Left ventricle myocardium superior (tissue), 1 donor: ENCODE measurements at regions of chr11 and their contacts with region 1.

Region 1: DNA sequence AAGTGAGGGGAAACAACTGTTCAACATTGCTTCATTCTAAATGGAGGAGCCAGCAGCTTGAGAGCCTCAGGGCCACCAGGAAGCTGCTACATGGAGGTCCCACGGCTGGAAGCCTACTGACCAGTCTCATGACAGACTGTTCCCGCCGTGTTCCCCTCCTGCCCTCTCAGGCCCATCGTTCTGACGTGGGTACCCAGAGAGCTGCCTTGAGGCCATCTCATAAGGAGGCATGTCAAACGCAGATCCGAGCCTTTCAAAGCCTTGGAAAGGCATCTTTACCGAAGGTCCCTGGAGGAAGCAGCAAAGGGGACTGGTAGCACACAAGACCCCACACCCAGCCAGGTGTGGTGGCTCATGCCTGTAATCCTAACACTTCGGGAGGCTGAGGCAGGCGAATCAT is 8.3 kb upstream of the ARHGEF17 start:
- DNase-seq: no peak
- ATAC-seq: no peak

Region 2: DNA sequence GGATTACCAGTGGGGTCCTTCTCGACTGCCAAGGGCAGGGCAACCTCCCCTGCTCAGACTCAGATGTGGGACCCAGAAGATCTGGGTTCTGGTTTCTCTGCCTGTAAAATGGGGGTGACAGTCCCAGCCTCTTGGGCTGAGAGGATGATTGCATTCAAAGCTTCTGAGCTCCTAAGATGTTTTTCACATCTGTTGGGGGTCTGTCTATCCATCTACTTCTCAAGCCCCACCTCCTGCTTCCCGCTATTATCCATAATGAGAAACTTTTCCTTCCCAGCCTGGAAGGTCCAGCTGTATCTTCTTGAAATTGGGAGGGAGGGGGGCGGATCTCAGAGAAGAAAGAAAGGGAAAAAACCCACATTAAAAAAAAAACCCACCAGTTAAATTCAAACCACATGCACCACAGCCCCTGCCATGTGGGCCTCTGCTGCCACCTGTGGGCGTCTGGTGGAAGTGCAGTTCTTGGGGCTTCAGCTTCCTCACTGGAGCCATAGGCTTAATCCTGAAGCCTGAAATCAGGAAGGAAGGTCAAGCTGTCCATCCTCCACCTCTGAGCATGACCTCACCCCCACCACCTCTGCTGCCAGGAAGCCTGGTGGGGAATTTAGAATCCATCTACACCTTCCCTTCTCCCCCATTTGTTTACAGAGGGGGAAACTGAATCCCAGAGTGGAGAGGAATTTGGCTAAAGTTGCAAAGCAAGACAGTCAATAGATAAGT is 35.6 kb after region 1 on chr11:
- intact Hi-C with region 1: loop called (anchors 5 kb)
- DNase-seq: peak; percentile 89
- ATAC-seq: peak; percentile 69

Region 3: GRCh38 chr11:73404048-73404447 is 104.3 kb after region 1 on chr11:
- intact Hi-C with region 1: no loop called
- DNase-seq: peak; percentile 81
- ATAC-seq: peak; percentile 92